ENCODE measurements at regions of chr2 and their contacts with region 1.

Region 1: DNA sequence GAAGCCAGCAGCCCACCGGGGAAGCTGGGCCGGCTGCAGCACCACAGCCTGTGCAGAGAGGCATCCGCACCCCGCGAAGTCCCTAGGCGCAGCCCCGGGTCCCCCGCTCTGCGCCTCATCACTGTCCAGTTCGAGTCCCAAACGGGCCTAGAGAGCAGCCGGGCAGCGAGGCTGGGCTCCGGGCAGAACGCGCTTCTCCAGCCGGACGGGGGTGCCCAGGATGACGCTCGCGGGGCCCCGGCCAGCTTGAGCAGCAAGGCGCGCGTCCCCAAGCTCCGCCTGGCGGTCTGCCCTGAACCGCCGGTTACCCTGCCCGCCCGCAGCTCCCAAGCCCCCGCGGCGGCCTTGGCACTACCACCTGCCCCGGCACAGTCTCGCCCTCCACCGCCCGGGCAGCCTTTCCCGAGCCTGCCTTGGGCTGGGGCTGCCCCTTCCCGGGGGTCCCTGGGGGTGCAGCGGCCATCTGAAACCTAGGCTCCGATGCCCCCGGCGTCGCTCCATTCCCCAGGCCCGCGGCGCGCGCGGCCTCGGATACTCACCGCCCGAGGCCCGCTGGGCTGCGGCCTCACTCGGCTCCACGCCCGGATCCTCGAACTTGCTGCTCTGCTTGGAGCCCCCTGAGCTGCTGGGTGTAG is 591 bp downstream of the SLC16A14 start:
- DNase-seq: peak; percentile 57
- H3K4me3 Mint-ChIP-seq: peak overlapping the region; percentile 81
- H3K27ac Mint-ChIP-seq: no peak overlapping the region
- H3K4me1 Mint-ChIP-seq: peaks cover 11% of the 10 kb centered on the region
- H3K27me3 Mint-ChIP-seq: peaks cover 12% of the 10 kb centered on the region

Region 2: DNA sequence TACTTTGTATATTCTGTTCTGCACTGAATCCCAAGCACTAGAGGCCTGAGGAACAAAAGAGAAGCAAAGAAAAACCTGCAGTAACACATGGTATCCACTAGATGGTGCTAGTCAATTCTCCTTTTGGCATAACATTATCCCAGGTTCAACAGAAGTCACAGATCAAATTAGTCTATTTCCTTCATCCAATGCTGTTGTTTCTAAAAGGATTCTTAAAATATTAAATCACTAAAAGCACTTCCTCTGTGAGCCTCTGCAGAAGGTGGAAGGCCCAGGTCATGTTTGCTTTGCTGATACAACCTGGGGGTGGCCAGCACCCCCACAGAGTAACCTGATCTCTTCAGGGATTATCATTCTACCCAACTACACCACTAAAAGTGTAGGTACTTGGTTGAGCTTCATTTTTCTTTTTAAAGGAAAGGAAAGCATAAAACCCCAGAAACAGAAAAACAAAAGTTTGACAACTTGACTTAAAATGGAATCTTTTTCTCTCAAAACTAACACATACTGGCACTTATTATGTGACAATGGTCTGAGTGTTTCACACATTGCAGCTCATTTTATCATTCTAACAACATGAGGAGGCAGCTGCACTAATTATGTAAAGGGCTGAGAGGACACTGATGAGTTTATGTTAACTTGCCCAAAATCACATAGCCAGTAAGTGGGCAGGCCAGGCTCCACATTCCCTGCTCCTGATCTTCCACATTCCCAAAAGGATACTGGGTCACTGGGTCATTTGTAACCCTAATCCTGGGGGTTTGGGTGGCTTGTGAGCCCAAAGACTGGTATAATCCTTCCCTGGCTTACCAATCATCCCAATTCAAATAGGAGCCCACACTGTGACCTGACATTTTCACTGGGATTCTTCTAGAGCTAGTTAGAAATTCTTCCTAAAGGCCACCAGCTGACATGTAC is 287.0 kb before region 1 on chr2:
- CTCF ChIA-PET with region 1: interaction called, 5 read pairs
- intact Hi-C with region 1: loop called (anchors 5 kb)
- DNase-seq: no peak
- H3K4me3 Mint-ChIP-seq: no peak overlapping the region
- H3K27ac Mint-ChIP-seq: no peak overlapping the region
- H3K4me1 Mint-ChIP-seq: peaks cover 11% of the 10 kb centered on the region
- H3K27me3 Mint-ChIP-seq: no peaks in the 10 kb centered on the region

Region 3: DNA sequence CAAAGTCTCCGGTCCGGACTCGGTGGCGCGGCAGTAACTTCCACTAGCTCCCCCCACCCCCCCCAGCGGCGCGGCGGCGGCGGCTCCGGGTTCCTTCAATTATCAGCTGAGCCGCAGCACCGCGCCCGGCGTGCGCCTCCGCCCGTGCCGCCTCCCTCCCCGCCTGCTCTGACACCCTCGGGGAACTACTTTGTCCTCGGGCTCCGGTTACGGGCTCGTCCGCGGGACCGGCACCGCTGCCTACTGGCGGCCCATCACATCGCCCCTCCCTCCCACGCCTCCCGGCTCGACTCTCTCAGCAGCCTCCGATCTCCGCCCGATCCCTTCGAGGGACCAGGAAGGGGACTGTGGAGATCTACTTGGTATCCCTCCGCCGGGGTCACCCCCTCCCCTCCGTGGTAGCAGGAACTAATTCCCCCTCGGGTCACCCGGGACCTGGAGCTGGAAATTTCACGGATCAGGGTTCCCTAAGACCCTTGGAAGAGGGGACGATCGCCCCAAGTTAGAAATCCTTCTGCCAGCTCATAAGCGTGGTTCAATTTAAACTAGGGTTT is 146.2 kb before region 1 on chr2 and contains the start of gene TRIP12:
- CTCF ChIA-PET with region 1: no interaction called
- intact Hi-C with region 1: loop called (anchors 1 kb)
- DNase-seq: peak; percentile 91
- H3K4me3 Mint-ChIP-seq: peak within 1 kb of the TSS; percentile 90
- H3K27ac Mint-ChIP-seq: peak within 1 kb of the TSS; percentile 99
- H3K4me1 Mint-ChIP-seq: peaks cover 34% of the 10 kb centered on the region
- H3K27me3 Mint-ChIP-seq: no peaks in the 10 kb centered on the region
- total RNA-seq, gene TRIP12: 188 to 190 TPM

Region 4: DNA sequence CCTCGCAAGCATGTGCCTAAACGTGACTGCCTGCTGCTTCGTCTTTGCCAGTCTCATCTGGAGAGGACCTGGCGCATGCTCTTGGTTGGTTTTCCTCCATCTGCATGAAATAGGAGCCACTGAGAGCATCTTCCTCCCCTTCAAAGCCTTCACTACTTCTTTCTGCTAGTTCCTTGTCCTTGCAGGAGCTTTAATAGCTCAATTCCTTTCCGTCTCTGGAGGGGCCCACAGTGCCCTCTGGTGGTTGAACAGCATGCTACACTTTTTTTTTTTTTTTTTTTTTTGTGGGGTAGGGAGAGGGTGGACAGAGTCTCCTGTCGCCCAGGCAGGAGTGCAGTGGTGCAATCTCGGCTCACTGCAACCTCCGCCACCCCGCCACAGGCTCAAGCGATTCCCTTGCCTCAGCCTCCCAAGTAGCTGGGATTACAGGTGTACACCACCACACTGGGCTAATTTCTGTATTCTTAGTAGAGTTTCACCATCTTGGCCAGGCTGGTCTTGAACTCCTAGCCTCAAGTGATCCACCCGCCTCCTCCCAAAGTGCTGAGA is 92.1 kb after region 1 on chr2:
- CTCF ChIA-PET with region 1: interaction called, 46 read pairs
- intact Hi-C with region 1: loop called (anchors 1 kb)
- DNase-seq: peak; percentile 66
- H3K4me3 Mint-ChIP-seq: no peak overlapping the region
- H3K27ac Mint-ChIP-seq: no peak overlapping the region
- H3K4me1 Mint-ChIP-seq: peaks cover 3% of the 10 kb centered on the region
- H3K27me3 Mint-ChIP-seq: no peaks in the 10 kb centered on the region

Region 5: GRCh38 chr2:230472621-230473018 is 404.5 kb after region 1 on chr2:
- CTCF ChIA-PET with region 1: interaction called, 4 read pairs
- intact Hi-C with region 1: loop called (anchors 1 kb)
- DNase-seq: peak; percentile 79
- H3K4me3 Mint-ChIP-seq: peak overlapping the region; percentile 1
- H3K27ac Mint-ChIP-seq: peak overlapping the region; percentile 74
- H3K4me1 Mint-ChIP-seq: peaks cover 31% of the 10 kb centered on the region
- H3K27me3 Mint-ChIP-seq: no peaks in the 10 kb centered on the region

Region 6: GRCh38 chr2:230798769-230799399 is 730.8 kb after region 1 on chr2:
- CTCF ChIA-PET with region 1: no interaction called
- intact Hi-C with region 1: loop called (anchors 5 kb)
- DNase-seq: peak; percentile 72
- H3K4me3 Mint-ChIP-seq: no peak overlapping the region
- H3K27ac Mint-ChIP-seq: no peak overlapping the region
- H3K4me1 Mint-ChIP-seq: peaks cover 14% of the 10 kb centered on the region
- H3K27me3 Mint-ChIP-seq: no peaks in the 10 kb centered on the region